AG04449 (cell line): ENCODE measurements at regions of chr2 and their contacts with region 1.

Region 1: GRCh38 chr2:152743002-152743401 is 24.6 kb downstream of the ARL6IP6 start:
- DNase-seq: no peak
- H3K4me3 ChIP-seq: no peak overlapping the region
- CTCF ChIP-seq: peak; percentile 43

Region 2: GRCh38 chr2:152720361-152720760 is 22.6 kb before region 1 on chr2:
- CTCF ChIA-PET with region 1: interaction called, 11 read pairs
- POLR2A ChIA-PET with region 1: no interaction called
- DNase-seq: no peak
- H3K4me3 ChIP-seq: no peak overlapping the region
- CTCF ChIP-seq: no peak

Region 3: DNA sequence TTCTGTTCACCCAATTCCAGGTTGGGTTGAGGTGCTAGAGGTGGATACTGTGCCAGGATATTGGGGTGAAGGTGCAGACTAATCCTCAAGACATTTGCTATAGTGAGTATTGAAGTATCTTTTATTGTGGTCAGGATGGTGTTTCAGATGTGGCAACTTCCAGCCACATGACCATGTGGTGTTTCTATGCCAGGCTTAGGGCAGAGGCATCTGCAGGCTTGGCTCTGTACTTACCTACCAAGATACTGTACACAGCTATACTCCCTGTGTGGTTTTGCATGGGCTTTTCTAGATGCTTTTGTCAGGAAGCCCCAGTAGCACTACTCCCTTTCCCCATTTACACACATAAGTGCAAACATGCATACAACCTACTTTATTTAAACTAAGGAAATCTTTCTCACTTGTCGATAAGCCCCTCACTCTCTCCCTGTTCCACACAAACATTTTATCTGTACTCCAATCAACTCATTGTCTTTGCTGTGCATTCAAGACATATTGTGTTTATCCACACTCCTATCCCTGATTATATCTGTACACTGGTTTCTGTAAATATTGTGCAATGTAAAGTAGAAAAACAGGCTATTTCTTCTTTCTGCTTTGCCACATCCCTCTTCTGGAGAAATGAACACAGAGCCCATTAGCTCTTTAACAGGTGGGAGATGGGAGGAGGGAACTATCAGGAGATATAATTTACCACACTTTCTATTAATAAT is 12.3 kb before region 1 on chr2:
- CTCF ChIA-PET with region 1: interaction called, 19 read pairs
- POLR2A ChIA-PET with region 1: no interaction called
- DNase-seq: no peak
- H3K4me3 ChIP-seq: no peak overlapping the region
- CTCF ChIP-seq: no peak

Region 4: GRCh38 chr2:153478334-153479261 is 735.6 kb after region 1 on chr2 and contains the start of gene RPRM:
- CTCF ChIA-PET with region 1: interaction called, 25 read pairs
- POLR2A ChIA-PET with region 1: no interaction called
- DNase-seq: no peak
- H3K4me3 ChIP-seq: peak within 1 kb of the TSS; percentile 57
- CTCF ChIP-seq: peak; percentile 73

Region 5: GRCh38 chr2:153519257-153519875 is 776.4 kb after region 1 on chr2:
- CTCF ChIA-PET with region 1: interaction called, 36 read pairs
- POLR2A ChIA-PET with region 1: no interaction called
- DNase-seq: no peak
- H3K4me3 ChIP-seq: no peak overlapping the region
- CTCF ChIP-seq: peak; percentile 48